Sciatic nerve (tissue), 2 donors: ENCODE measurements at regions of chr1 and their contacts with region 1.

Region 1: DNA sequence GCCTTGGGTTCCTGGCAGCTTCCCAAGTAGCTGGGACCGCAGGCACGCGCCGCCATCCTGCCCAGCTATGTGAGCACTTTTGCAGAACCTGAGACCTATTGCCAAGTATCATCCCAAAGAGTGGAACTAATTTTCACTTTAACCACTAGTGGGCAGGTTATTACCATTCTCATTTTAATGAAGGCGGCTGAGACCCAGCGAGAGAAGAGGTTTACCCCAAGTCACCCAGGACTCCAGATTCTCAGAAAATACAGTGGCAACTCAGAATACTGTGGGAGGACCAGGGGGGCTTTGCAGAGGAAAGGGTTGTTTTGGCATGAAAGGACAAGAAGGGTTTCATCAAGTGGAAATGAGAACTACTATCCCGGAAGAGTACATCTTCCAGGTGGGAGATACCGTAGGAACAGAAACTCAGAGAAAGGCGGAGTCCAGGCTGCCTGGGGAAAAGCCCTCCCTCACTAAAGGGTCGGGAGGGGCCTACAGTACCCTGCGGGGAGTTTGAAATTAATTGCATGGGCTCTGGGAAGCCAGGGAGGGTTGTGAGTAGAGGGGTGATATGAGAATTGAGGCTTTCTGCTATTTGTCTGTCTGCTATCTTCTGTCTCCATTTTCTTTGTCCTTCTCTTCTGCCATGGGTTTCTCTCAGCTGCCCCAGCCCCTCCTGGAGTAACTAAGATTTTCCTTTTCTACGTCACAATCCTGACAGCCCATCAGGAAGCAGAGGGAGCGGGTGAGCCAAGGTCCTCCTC is 7.2 kb upstream of the SEMA4A start:
- DNase-seq: peak; percentile 79
- ATAC-seq: peak; percentile 66

Region 2: GRCh38 chr1:156228501-156228900 is 82.3 kb after region 1 on chr1:
- intact Hi-C with region 1: loop called (anchors 2 kb)
- DNase-seq: no peak
- ATAC-seq: no peak